ENCODE measurements at regions of chr20 and their contacts with region 1.

Region 1: DNA sequence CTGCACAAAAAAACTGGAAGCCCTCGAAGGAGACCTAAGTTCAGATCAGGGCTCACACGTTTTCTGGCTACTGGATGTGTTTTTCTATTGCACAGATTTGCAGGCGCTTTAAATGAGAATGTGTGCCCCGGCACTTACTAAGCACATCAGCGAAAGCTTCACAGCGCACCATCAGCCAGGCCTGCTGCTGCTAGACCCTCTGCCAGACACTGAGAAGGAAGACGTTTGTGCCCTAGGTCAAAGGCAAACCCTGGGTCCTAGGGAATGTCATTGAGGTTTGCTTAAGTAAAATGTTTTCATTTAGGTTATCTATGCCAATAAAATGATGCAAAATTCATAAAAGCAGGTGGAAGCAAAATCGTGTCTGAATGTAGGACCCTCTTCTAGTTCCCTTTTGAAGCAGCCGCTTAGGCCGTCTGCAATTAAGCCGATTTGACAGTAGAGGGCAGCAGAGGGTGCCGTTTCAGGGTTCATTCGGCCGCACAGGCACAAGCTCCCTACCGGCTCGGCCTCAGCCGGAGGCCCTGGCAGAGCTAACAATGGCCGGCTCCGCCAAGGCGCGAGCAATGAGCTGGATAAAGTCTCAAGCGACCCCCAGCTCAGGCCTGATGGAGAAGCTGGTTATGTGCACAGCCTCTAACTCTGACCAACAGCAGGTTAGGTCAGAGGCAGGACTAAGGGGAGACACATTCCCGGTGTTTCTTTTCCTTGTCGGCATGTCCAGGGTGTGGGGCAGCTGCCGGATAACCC is 107.2 kb upstream of the FOXA2 start:
- DNase-seq: peak; percentile 79 to 92 (median 89)
- H3K4me3 ChIP-seq: no peak overlapping the region
- H3K27ac ChIP-seq: no peak overlapping the region
- H3K4me1 ChIP-seq: peaks cover 0 to 4% (median 0%) of the 10 kb centered on the region in 3 donors
- H3K27me3 ChIP-seq: no peaks in the 10 kb centered on the region
- CTCF ChIP-seq: peak; percentile 80

Region 2: DNA sequence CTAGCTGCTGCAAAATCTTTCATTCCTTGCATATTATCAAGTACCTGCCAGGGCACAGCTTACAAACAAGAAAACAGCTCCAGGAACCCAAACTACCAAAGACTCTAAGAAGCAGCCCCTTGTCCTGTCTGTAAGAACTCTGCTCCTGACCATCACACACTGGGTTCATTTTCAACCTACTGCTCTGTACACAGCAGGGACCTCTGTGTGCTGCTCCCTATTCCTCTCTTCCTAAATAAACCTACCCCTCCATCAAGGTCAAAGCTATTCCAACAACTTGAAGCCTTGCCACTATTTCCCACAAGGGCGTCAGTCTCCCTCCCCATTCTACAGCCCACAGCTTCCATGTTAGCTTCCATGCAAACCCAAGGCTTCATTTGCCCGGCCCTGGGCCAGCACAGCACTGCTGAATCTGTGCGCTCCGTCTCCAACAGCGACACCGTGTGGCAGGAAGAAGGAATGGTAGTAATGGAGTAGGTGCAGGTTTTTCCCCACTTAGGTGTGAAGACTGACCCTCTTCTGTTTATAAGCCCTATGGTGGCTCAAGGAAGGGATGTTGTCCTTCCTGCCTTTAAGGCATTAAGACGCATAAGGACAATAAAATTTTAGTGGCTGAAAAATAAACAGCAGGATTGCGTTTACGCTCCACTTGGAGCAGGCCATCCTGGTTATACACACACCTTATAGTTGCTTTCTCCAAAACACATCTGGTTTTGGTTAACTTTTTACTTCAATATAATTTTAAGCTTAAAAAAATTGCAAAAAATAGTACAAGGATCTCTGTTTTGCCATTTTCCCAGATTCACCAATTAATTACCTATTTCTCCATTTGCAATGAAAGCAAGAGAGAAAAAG is 543.9 kb after region 1 on chr20:
- intact Hi-C with region 1: loop called (anchors 10 kb)
- DNase-seq: peak in 4 of 5 donors; percentile 51 to 67 (median 60)
- H3K4me3 ChIP-seq: no peak overlapping the region
- H3K27ac ChIP-seq: no peak overlapping the region
- H3K4me1 ChIP-seq: no peaks in the 10 kb centered on the region
- H3K27me3 ChIP-seq: no peaks in the 10 kb centered on the region
- CTCF ChIP-seq: peak; percentile 75

Region 3: GRCh38 chr20:23340524-23340923 is 649.0 kb after region 1 on chr20:
- intact Hi-C with region 1: loop called (anchors 5 kb)
- DNase-seq: peak in 4 of 5 donors; percentile 70 to 84 (median 73)
- H3K4me3 ChIP-seq: no peak overlapping the region
- H3K27ac ChIP-seq: no peak overlapping the region
- H3K4me1 ChIP-seq: no peaks in the 10 kb centered on the region
- H3K27me3 ChIP-seq: no peaks in the 10 kb centered on the region
- CTCF ChIP-seq: peak; percentile 67